ENCODE measurements at regions of chr14 and their contacts with region 1.

Region 1: GRCh38 chr14:102086972-102087761 is at the start of gene HSP90AA1:
- DNase-seq: peak; percentile 93 to 95
- H3K4me3 ChIP-seq: peak within 1 kb of the TSS; percentile 83 to 100 (median 88)
- H3K27ac ChIP-seq: peak within 1 kb of the TSS; percentile 100
- H3K4me1 ChIP-seq: peaks cover 20 to 21% of the 10 kb centered on the region in 2 donors
- H3K27me3 ChIP-seq: no peaks in the 10 kb centered on the region
- CTCF ChIP-seq: no peak
- POLR2A ChIP-seq: peak; percentile 96
- total RNA-seq, gene HSP90AA1: 467 to 860 (median 474) TPM

Region 2: DNA sequence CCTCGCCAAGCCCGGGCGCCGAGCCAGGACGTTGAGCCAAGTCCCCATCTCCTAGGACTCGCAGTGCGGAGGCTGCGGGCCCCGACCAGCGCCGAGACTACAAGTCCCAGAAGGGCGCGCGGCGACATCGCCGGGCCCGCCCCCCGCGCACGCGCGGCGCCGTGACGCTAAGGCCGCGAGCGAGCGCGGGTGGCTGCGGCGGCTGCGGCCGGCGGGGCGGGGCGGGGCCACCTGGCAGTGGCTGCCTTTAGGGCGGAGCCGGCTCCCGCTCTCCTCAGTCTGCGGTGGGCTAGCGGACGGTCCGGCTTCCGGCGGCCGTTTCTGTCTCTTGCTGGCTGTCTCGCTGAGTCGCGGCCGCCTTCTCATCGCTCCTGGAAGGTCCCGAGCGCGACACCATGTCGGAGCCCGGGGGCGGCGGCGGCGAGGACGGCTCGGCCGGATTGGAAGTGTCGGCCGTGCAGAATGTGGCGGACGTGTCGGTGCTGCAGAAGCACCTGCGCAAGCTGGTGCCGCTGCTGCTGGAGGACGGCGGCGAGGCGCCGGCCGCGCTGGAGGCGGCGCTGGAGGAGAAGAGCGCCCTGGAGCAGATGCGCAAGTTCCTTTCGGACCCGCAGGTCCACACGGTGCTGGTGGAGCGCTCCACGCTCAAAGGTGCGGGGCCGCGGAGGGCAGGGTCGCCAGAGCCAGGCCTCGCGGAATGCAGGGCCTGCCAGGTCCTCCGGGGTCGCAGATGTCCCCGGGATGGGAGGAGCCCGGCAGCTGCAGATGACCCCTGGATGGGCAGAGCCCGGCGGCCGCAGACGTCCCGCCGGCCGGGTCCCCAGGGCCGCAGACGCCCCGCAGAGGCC is 122.6 kb before region 1 on chr14 and contains the start of gene DYNC1H1:
- intact Hi-C with region 1: loop called (anchors 5 kb)
- DNase-seq: peak; percentile 83 to 91
- H3K4me3 ChIP-seq: peak within 1 kb of the TSS; percentile 91 to 100 (median 98)
- H3K27ac ChIP-seq: peak within 1 kb of the TSS; percentile 97 to 98
- H3K4me1 ChIP-seq: peaks cover 0 to 6% of the 10 kb centered on the region in 2 donors
- H3K27me3 ChIP-seq: no peaks in the 10 kb centered on the region
- CTCF ChIP-seq: peak in 1 of 3 donors; percentile 14
- POLR2A ChIP-seq: peak; percentile 79
- total RNA-seq, gene DYNC1H1: 355 to 424 (median 391) TPM

Region 3: GRCh38 chr14:102063091-102063802 is 23.9 kb before region 1 on chr14:
- intact Hi-C with region 1: loop called (anchors 1 kb)
- DNase-seq: peak; percentile 89 to 93
- H3K4me3 ChIP-seq: no peak overlapping the region
- H3K27ac ChIP-seq: peak overlapping the region; percentile 74 to 78
- H3K4me1 ChIP-seq: no peaks in the 10 kb centered on the region
- H3K27me3 ChIP-seq: no peaks in the 10 kb centered on the region
- CTCF ChIP-seq: peak; percentile 39 to 72 (median 46)
- POLR2A ChIP-seq: no peak

Measured in breast epithelium (tissue), 4 donors.